ENCODE measurements at regions of chr12 and their contacts with region 1.

Region 1: GRCh38 chr12:47651368-47652254 is 54.2 kb downstream of the RPAP3 start:
- DNase-seq: peak; percentile 3
- ATAC-seq: peak; percentile 92
- H3K4me3 ChIP-seq: no peak overlapping the region
- H3K27ac ChIP-seq: no peak overlapping the region
- H3K4me1 ChIP-seq: no peaks in the 10 kb centered on the region
- H3K27me3 ChIP-seq: no peaks in the 10 kb centered on the region
- CTCF ChIP-seq: peak; percentile 34 to 61 (median 38); a peak in 5 of 6 replicates
- POLR2A ChIP-seq: no peak
- RAD21 ChIP-seq: peak; percentile 66

Region 2: DNA sequence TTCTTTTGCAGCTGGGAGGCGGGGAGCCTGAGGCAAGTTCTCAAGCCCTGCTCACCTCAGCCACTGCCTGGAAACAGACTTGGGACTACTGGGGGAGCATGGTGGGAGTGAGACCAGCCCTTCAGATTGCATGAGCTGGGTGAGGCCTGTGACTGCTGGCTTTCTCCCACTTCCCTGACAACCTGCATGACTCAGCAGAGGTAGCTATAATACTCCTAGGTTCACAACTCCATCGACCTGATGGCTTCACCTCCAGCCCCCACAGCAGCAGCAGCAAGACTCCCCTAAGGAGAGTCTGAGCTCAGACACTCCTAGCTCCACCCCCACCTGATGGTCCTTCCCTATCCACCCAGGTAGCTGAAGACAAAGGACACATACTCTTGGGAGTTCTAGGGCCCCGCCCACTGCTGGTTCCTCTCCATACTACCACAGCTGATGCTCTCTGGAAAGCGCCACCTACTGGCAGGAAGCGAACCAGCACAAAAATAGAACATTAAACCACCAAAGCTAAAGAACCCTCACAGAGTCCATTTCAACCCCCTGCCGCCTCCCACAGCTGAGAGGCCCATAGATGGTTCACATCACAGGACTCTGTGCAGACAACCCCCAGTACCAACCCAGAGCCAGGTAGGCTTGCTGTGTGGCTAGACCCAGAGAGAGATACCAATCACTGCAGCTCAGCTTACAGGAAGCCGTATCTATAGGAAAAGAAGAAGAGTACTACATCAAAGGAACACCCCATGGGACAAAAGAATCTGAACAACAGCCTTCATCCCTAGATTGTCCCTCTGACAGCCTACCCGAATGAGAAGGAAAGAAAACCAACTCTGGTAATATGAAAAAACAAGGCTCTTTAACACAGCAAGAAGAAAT is 14.5 kb before region 1 on chr12:
- CTCF ChIA-PET with region 1: interaction called, 40 read pairs
- POLR2A ChIA-PET with region 1: no interaction called
- RAD21 ChIA-PET with region 1: interaction called in 1 of 2 experiments, 3 read pairs
- intact Hi-C with region 1: no loop called
- DNase-seq: peak; percentile 69
- ATAC-seq: peak; percentile 98
- H3K4me3 ChIP-seq: no peak overlapping the region
- H3K27ac ChIP-seq: peak overlapping the region; percentile 52
- H3K4me1 ChIP-seq: peaks cover 7 to 12% of the 10 kb centered on the region in 2 experiments; a peak in 3 of 4 replicates
- H3K27me3 ChIP-seq: no peaks in the 10 kb centered on the region
- CTCF ChIP-seq: peak; percentile 62 to 88 (median 84)
- POLR2A ChIP-seq: no peak
- RAD21 ChIP-seq: peak; percentile 48; the same call in 1 of the 2 replicates

Region 3: DNA sequence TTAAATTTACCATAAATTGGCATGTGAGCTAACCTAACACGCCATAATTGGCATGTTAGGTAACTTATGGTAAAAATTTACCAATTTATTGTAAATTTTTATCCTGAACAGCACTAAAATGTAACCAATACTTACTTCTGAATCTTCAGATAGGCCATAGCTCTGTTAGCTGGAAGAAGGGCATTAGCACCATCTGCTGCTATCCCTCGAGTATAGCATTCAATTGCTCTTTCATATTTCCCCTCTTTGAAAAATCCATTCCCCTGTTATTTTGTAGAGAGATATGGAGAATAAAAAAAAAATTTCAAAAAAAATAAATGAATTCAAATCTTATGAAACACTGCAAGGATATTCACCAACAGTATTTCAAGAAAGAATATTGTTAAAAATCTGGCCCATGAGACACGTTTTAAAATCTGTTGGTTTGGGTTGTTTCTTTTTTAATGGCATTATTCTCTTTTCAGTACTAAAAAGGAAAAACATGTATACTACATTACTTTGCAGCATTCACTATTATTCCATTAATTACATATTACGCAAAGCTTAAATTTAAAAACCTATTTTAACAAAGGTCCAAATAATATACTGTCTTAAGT is 35.1 kb after region 1 on chr12:
- CTCF ChIA-PET with region 1: interaction called, 3 read pairs
- POLR2A ChIA-PET with region 1: no interaction called
- RAD21 ChIA-PET with region 1: no interaction called
- intact Hi-C with region 1: loop called (anchors 5 kb)
- DNase-seq: peak; percentile 18
- ATAC-seq: peak; percentile 75
- H3K4me3 ChIP-seq: no peak overlapping the region
- H3K27ac ChIP-seq: no peak overlapping the region
- H3K4me1 ChIP-seq: no peaks in the 10 kb centered on the region
- H3K27me3 ChIP-seq: no peaks in the 10 kb centered on the region
- CTCF ChIP-seq: peak; percentile 62 to 66 (median 63); a peak in 5 of 6 replicates
- POLR2A ChIP-seq: no peak
- RAD21 ChIP-seq: peak; percentile 73